Activated CD4-positive, alpha-beta T cell treated with anti-CD3 and anti-CD28 coated beads for 36 hours (primary cell): ENCODE measurements at regions of chr6 and their contacts with region 1.

Region 1: DNA sequence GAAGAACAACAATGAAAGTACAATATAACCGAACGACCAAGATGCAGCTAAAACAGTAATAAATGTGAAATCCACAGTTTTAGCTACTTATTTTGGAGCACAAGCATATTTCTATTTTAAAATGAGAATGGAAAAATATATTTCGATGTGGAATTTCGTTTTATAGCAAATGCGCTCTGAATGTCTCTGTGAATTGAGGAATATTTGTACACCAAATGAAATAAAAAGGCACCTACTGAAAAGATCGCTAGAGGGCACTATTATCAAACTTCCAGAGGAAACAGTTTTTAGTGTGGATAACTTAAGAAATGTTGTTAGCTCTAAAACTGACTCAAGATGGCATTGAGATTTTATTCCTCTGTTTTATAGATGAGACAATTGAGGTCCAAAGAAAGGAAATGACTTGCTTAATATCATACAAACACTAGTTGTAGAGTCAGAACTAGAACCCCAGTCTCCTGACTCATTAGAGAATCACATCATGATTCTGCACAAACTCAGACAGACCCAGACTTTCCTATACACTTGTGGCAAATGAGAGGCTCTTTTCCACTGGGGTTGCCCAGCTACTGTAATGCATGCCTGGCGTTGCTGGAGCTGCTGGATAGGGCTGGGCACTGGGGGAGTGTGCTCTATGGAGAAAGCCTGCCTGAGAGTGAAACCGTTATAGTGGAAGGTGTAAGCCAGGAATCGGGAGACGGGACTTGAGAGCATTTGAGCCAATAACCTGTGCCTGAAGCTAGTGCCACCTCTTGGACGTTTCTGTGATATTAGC is 51.9 kb downstream of the GCLC start:
- DNase-seq: peak; percentile 72
- ATAC-seq: peak; percentile 96
- H3K4me3 Mint-ChIP-seq: no peak overlapping the region
- H3K27ac Mint-ChIP-seq: no peak overlapping the region
- H3K4me1 Mint-ChIP-seq: peaks cover 24% of the 10 kb centered on the region
- H3K27me3 Mint-ChIP-seq: peaks cover 16% of the 10 kb centered on the region

Region 2: GRCh38 chr6:53171605-53172446 is 321.2 kb before region 1 on chr6:
- CTCF ChIA-PET with region 1: interaction called, 11 read pairs
- POLR2A ChIA-PET with region 1: no interaction called
- intact Hi-C with region 1: no loop called
- DNase-seq: peak; percentile 95
- ATAC-seq: peak; percentile 98
- H3K4me3 Mint-ChIP-seq: no peak overlapping the region
- H3K27ac Mint-ChIP-seq: no peak overlapping the region
- H3K4me1 Mint-ChIP-seq: no peaks in the 10 kb centered on the region
- H3K27me3 Mint-ChIP-seq: no peaks in the 10 kb centered on the region

Region 3: GRCh38 chr6:53437557-53438202 is 55.4 kb before region 1 on chr6:
- CTCF ChIA-PET with region 1: interaction called, 3 read pairs
- POLR2A ChIA-PET with region 1: no interaction called
- intact Hi-C with region 1: loop called in 1 of 2 experiments (anchors 2 kb)
- DNase-seq: peak; percentile 34
- ATAC-seq: peak; percentile 53
- H3K4me3 Mint-ChIP-seq: no peak overlapping the region
- H3K27ac Mint-ChIP-seq: no peak overlapping the region
- H3K4me1 Mint-ChIP-seq: peaks cover 28% of the 10 kb centered on the region
- H3K27me3 Mint-ChIP-seq: peaks cover 3% of the 10 kb centered on the region

Region 4: GRCh38 chr6:53651764-53652401 is 158.8 kb after region 1 on chr6:
- CTCF ChIA-PET with region 1: interaction called, 47 read pairs
- POLR2A ChIA-PET with region 1: no interaction called
- intact Hi-C with region 1: loop called (anchors 1 kb)
- DNase-seq: peak; percentile 87
- ATAC-seq: peak; percentile 95
- H3K4me3 Mint-ChIP-seq: peak overlapping the region; percentile 81
- H3K27ac Mint-ChIP-seq: peak overlapping the region; percentile 82
- H3K4me1 Mint-ChIP-seq: peaks cover 28% of the 10 kb centered on the region
- H3K27me3 Mint-ChIP-seq: no peaks in the 10 kb centered on the region

Region 5: DNA sequence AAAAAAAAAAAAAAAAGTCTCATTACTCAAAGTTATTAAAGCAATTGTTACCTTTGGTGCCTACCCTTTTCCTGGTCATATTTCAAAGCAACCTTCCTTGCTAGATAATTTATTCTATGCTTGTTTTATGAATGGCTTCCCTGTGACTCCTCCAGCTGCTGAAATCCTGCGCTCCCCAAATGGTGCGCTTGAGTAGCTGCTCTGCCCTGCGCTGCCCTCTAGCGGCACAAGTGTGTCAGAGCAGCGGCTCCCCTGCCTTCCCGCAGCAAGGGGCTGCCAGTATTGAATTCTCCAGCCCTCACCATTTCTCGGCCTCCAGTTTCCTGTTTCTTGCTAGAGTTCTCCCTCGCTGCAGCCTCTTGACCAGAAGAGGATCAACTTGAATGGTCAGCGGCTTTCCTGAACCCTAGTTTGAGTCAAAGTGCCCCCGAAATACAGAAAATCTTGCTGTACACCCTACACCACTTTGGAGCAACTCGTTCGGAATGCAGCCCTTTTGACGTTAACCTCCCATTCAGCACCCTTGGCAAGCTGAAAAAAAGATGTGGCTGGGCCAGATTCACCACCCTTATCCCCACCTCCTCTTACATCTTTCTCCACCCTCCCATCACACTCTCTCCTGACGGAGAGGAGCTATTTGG is 232.9 kb after region 1 on chr6:
- CTCF ChIA-PET with region 1: interaction called, 148 read pairs
- POLR2A ChIA-PET with region 1: interaction called, 3 read pairs
- intact Hi-C with region 1: loop called (anchors 1 kb)
- DNase-seq: peak; percentile 86
- ATAC-seq: peak; percentile 91
- H3K4me3 Mint-ChIP-seq: no peak overlapping the region
- H3K27ac Mint-ChIP-seq: no peak overlapping the region
- H3K4me1 Mint-ChIP-seq: peaks cover 5% of the 10 kb centered on the region
- H3K27me3 Mint-ChIP-seq: peaks cover 12% of the 10 kb centered on the region